Dendritic cell treated with granulocyte-macrophage colony-stimulating factor and Interleukin-4, amounts not matched to agents 40 ng/mL and 50 ng/mL, for 4 days (primary cell): ENCODE measurements at regions of chr7 and their contacts with region 1.

Region 1: DNA sequence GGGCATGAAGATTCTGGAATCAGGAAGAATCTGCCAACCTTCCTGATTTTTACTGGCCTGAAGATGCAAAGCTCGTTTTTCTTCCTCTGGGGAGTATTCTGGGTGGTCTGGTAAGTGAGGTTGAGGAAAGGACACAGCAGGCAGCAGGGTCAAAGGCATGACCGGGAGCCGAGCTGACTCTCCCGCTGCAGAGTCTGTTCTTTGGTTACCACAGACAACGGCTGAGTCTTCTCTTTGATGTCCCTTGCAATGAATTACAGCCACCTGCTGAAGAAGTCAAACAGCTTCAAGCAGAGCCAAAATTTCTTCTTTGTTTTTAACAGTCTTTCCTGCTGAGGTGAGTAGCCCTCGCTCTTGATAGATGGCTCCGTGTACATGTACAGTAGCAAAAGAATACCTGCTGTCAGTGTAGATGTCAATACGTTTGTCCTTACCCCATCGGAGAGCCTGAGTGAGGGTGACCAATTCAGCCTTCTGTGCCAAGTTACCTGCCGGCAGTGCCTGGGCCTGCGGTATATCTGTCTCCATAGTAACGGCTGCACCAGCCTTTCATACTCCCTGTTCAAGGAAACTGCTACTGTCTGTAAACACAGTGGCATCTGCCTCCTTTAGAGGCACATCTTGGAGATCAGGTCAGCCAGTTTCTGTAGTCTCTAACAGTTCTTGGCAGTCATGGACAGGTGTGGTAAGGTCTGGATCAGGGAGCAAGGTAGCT is 76.4 kb downstream of the PRR15 start:
- H3K4me3 Mint-ChIP-seq: no peak overlapping the region
- H3K27ac Mint-ChIP-seq: no peak overlapping the region
- H3K4me1 Mint-ChIP-seq: no peaks in the 10 kb centered on the region
- H3K27me3 Mint-ChIP-seq: no peaks in the 10 kb centered on the region

Region 2: GRCh38 chr7:29748286-29749108 is 108.5 kb after region 1 on chr7:
- intact Hi-C with region 1: loop called (anchors 10 kb)
- H3K4me3 Mint-ChIP-seq: no peak overlapping the region
- H3K27ac Mint-ChIP-seq: no peak overlapping the region
- H3K4me1 Mint-ChIP-seq: no peaks in the 10 kb centered on the region
- H3K27me3 Mint-ChIP-seq: peaks cover 5% of the 10 kb centered on the region

Region 3: GRCh38 chr7:29921404-29922010 is 281.5 kb after region 1 on chr7:
- intact Hi-C with region 1: loop called (anchors 5 kb)
- H3K4me3 Mint-ChIP-seq: no peak overlapping the region
- H3K27ac Mint-ChIP-seq: no peak overlapping the region
- H3K4me1 Mint-ChIP-seq: no peaks in the 10 kb centered on the region
- H3K27me3 Mint-ChIP-seq: no peaks in the 10 kb centered on the region

Region 4: GRCh38 chr7:30062591-30062990 is 422.6 kb after region 1 on chr7:
- intact Hi-C with region 1: loop called (anchors 5 kb)
- H3K4me3 Mint-ChIP-seq: no peak overlapping the region
- H3K27ac Mint-ChIP-seq: no peak overlapping the region
- H3K4me1 Mint-ChIP-seq: peaks cover 6% of the 10 kb centered on the region
- H3K27me3 Mint-ChIP-seq: no peaks in the 10 kb centered on the region